Posterior vena cava (tissue), 2 donors: ENCODE measurements at regions of chr2 and their contacts with region 1.

Region 1: GRCh38 chr2:122019724-122020123 is 264.3 kb downstream of the TSN start:
- DNase-seq: no peak

Region 2: GRCh38 chr2:123688231-123688940 is 1668.7 kb after region 1 on chr2:
- intact Hi-C with region 1: loop called in 1 of 2 experiments (anchors 5 kb)
- DNase-seq: no peak